ENCODE measurements at regions of chr9 and their contacts with region 1.

Region 1: DNA sequence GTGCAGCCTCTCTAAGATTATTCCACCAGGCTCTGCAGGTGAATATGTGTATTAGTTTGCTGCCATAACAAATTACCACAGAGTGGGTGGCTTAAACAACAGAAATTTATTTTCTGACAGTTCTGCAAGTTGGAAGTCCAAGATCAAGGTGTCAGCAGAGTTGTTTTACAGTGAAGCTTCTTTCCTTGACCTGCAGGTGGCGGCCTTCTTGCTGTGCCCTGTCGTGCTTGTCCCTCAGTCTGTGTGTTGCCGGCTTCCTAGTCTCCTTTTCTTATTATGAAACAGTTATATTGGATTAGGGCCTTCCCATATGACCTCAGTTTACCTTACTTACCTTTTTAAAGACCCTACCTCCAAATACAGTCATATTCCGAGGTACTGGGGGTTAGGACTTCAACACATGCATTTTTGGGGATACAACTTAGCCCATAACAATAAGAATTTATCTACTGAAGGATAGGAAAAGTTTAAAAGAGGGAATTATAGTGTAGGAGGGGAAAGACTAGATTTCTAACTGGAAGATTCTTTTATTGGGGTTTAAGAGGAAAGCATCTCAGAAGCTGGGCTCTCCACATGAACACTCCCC is 97.4 kb downstream of the OSTF1 start:
- DNase-seq: peak; percentile 38
- ATAC-seq: peak; percentile 85
- H3K4me3 ChIP-seq: no peak overlapping the region
- H3K27ac ChIP-seq: no peak overlapping the region
- H3K4me1 ChIP-seq: peaks cover 6 to 14% of the 10 kb centered on the region in 2 experiments; a peak in 2 of 4 replicates
- H3K27me3 ChIP-seq: no peaks in the 10 kb centered on the region
- CTCF ChIP-seq: peak; percentile 36 to 85 (median 78); a peak in 5 of 6 replicates
- POLR2A ChIP-seq: no peak
- RAD21 ChIP-seq: no peak; the same call in 1 of the 2 replicates

Region 2: GRCh38 chr9:75001719-75002422 is 183.8 kb before region 1 on chr9:
- CTCF ChIA-PET with region 1: no interaction called
- POLR2A ChIA-PET with region 1: no interaction called
- RAD21 ChIA-PET with region 1: no interaction called
- intact Hi-C with region 1: loop called (anchors 10 kb)
- DNase-seq: peak; percentile 74
- ATAC-seq: peak; percentile 95
- H3K4me3 ChIP-seq: no peak overlapping the region
- H3K27ac ChIP-seq: no peak overlapping the region
- H3K4me1 ChIP-seq: no peaks in the 10 kb centered on the region
- H3K27me3 ChIP-seq: no peaks in the 10 kb centered on the region
- CTCF ChIP-seq: peak; percentile 65 to 81 (median 67)
- POLR2A ChIP-seq: no peak
- RAD21 ChIP-seq: peak; percentile 74

Region 3: GRCh38 chr9:75238311-75238978 is 52.8 kb after region 1 on chr9:
- CTCF ChIA-PET with region 1: no interaction called
- POLR2A ChIA-PET with region 1: no interaction called
- RAD21 ChIA-PET with region 1: no interaction called
- intact Hi-C with region 1: loop called (anchors 10 kb)
- DNase-seq: peak; percentile 62
- ATAC-seq: peak; percentile 99
- H3K4me3 ChIP-seq: no peak overlapping the region
- H3K27ac ChIP-seq: no peak overlapping the region
- H3K4me1 ChIP-seq: no peaks in the 10 kb centered on the region
- H3K27me3 ChIP-seq: no peaks in the 10 kb centered on the region
- CTCF ChIP-seq: peak; percentile 53 to 68 (median 66); a peak in 5 of 6 replicates
- POLR2A ChIP-seq: no peak
- RAD21 ChIP-seq: peak; percentile 70

Measured in HCT116 (cell line).